GM12878 (cell line): ENCODE measurements at regions of chr14 and their contacts with region 1.

Region 1: DNA sequence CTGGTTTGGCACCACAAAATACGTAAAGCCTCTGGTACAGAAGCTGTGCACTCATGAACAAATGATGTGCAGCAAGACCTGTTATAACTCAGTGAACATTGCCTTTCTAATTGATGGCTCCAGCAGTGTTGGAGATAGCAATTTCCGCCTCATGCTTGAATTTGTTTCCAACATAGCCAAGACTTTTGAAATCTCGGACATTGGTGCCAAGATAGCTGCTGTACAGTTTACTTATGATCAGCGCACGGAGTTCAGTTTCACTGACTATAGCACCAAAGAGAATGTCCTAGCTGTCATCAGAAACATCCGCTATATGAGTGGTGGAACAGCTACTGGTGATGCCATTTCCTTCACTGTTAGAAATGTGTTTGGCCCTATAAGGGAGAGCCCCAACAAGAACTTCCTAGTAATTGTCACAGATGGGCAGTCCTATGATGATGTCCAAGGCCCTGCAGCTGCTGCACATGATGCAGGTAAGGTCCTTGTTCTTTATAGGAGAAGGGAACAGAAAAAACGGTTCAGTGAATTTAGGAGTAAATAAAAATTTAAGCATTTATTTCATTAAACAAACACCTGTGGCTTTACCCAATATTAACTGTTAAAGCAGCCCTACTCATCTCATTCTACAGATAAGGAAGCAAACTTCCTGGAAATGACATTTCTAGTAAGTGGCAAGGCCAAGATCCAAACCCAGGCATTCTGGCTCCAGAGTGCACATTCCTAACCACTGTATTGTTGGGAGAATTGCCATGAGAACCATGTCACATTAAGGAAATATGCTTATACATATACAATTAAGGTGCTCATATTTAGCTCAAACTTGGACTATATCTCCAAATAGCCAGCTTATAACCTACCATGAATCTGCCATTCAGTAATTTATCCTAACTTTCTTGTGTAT is 11.7 kb downstream of the COCH start:
- DNase-seq: no peak
- ATAC-seq: no peak
- H3K4me3 ChIP-seq: no peak overlapping the region
- H3K27ac ChIP-seq: no peak overlapping the region
- H3K4me1 ChIP-seq: no peaks in the 10 kb centered on the region
- H3K27me3 ChIP-seq: no peaks in the 10 kb centered on the region
- CTCF ChIP-seq: no peak
- EP300 ChIP-seq: no peak
- POLR2A ChIP-seq: no peak
- RAD21 ChIP-seq: no peak

Region 2: GRCh38 chr14:30874120-30874998 is 11.7 kb before region 1 on chr14 and contains the start of gene COCH:
- CTCF ChIA-PET with region 1: interaction called, 4 read pairs
- POLR2A ChIA-PET with region 1: interaction called, 5 read pairs
- RAD21 ChIA-PET with region 1: no interaction called
- SMC1A ChIA-PET with region 1: interaction called, 11 read pairs
- in situ Hi-C with region 1: no loop called
- intact Hi-C with region 1: no loop called
- DNase-seq: no peak
- ATAC-seq: peak; percentile 88
- H3K4me3 ChIP-seq: peak within 1 kb of the TSS; percentile 66
- H3K27ac ChIP-seq: no peak within 1 kb of the TSS
- H3K4me1 ChIP-seq: peaks cover 11% of the 10 kb centered on the region
- H3K27me3 ChIP-seq: peaks cover 2 to 6% of the 10 kb centered on the region in 2 experiments; a peak in 2 of 4 replicates
- CTCF ChIP-seq: peak; percentile 33 to 50 (median 40); a peak in 3 of 6 replicates
- EP300 ChIP-seq: no peak
- POLR2A ChIP-seq: peak; percentile 80
- RAD21 ChIP-seq: peak; percentile 19; the same call in 1 of the 2 replicates
- polyA plus RNA-seq, gene COCH: 2.6 to 4.6 TPM

Region 3: GRCh38 chr14:30921305-30921704 is 35.2 kb after region 1 on chr14:
- CTCF ChIA-PET with region 1: no interaction called
- POLR2A ChIA-PET with region 1: no interaction called
- RAD21 ChIA-PET with region 1: no interaction called
- SMC1A ChIA-PET with region 1: no interaction called
- in situ Hi-C with region 1: no loop called
- intact Hi-C with region 1: no loop called
- DNase-seq: no peak
- ATAC-seq: no peak
- H3K4me3 ChIP-seq: no peak overlapping the region
- H3K27ac ChIP-seq: no peak overlapping the region
- H3K4me1 ChIP-seq: no peaks in the 10 kb centered on the region
- H3K27me3 ChIP-seq: no peaks in the 10 kb centered on the region
- CTCF ChIP-seq: no peak
- EP300 ChIP-seq: no peak
- POLR2A ChIP-seq: no peak
- RAD21 ChIP-seq: no peak